MCF 10A (cell line): ENCODE measurements at regions of chr7 and their contacts with region 1.

Region 1: GRCh38 chr7:112550468-112551060 is 69.8 kb downstream of the LSMEM1 start:
- DNase-seq: peak; percentile 72
- H3K4me3 Mint-ChIP-seq: no peak overlapping the region
- H3K27ac Mint-ChIP-seq: no peak overlapping the region
- H3K4me1 Mint-ChIP-seq: no peaks in the 10 kb centered on the region
- H3K27me3 Mint-ChIP-seq: no peaks in the 10 kb centered on the region
- CTCF ChIP-seq: peak; percentile 95

Region 2: DNA sequence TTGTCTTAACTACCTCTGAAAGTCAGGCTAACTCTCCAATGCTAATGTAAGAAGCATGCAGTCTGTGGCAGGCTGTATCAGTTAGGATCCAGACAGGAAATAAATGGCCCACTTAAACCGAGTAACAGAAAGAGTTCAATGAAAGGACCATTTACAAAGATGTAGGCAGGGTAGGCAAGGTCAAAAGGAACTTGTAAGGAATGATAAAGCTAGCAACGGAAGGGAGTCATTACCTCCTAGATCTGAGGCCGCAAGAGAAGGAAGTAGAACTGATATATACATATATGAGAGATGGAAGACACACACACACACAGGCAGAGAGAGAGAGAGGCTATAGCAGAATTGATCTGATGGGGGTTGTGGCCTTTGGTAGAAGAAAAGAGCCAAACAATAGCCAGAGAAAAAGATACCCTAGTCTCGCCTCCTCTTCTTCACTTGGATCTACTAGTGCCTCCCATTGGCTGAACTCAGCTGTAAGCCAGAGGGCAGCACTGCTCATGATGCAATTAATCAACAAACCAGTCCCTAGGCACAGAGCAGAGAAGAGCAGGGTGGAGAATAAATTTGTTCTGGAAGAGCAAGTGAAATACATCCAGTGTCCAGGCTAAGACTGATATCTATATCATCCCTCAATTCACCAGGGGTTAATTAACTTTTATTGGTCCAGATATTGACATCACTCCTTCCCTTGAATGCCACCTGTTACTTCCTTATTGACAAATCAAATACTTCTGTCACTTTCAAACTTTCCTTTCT is 21.5 kb after region 1 on chr7:
- CTCF ChIA-PET with region 1: interaction called, 12 read pairs
- POLR2A ChIA-PET with region 1: no interaction called
- intact Hi-C with region 1: no loop called
- DNase-seq: peak; percentile 35
- H3K4me3 Mint-ChIP-seq: no peak overlapping the region
- H3K27ac Mint-ChIP-seq: no peak overlapping the region
- H3K4me1 Mint-ChIP-seq: peaks cover 14% of the 10 kb centered on the region
- H3K27me3 Mint-ChIP-seq: no peaks in the 10 kb centered on the region
- CTCF ChIP-seq: no peak

Region 3: GRCh38 chr7:112898432-112899290 is 348.1 kb after region 1 on chr7:
- CTCF ChIA-PET with region 1: interaction called, 68 read pairs
- POLR2A ChIA-PET with region 1: no interaction called
- intact Hi-C with region 1: loop called (anchors 1 kb)
- DNase-seq: peak; percentile 78
- H3K4me3 Mint-ChIP-seq: no peak overlapping the region
- H3K27ac Mint-ChIP-seq: peak overlapping the region; percentile 19
- H3K4me1 Mint-ChIP-seq: no peaks in the 10 kb centered on the region
- H3K27me3 Mint-ChIP-seq: no peaks in the 10 kb centered on the region
- CTCF ChIP-seq: peak; percentile 80

Region 4: DNA sequence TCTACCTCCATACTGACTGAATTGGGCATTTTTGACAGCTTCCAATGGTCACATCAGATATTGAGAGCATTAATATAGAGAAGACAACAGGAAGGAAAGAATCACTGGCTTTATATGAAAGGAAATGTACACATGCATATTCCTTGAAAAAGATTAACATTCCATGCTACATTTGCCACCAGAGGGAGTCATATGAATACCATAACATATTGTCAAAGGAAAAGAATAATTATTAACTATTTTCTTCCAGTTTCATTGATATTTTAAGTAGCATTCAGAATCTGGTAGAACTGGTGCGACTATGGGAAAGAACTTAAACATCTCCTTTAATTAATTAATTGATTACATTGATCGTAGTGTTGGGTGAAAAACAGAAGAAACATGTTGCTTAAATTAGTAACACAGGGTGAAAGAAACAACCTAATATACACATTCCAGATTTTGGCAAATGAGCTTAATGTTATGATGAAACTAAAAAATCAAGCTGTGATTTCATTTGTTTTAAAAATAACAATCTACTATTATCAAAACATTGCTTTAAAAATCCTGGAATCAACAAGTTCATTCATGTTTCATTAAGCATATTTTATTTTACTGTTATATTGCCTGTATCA is 464.6 kb after region 1 on chr7:
- CTCF ChIA-PET with region 1: interaction called, 4 read pairs
- POLR2A ChIA-PET with region 1: no interaction called
- intact Hi-C with region 1: loop called (anchors 1 kb)
- DNase-seq: peak; percentile 53
- H3K4me3 Mint-ChIP-seq: no peak overlapping the region
- H3K27ac Mint-ChIP-seq: peak overlapping the region; percentile 70
- H3K4me1 Mint-ChIP-seq: peaks cover 15% of the 10 kb centered on the region
- H3K27me3 Mint-ChIP-seq: no peaks in the 10 kb centered on the region
- CTCF ChIP-seq: no peak

Region 5: DNA sequence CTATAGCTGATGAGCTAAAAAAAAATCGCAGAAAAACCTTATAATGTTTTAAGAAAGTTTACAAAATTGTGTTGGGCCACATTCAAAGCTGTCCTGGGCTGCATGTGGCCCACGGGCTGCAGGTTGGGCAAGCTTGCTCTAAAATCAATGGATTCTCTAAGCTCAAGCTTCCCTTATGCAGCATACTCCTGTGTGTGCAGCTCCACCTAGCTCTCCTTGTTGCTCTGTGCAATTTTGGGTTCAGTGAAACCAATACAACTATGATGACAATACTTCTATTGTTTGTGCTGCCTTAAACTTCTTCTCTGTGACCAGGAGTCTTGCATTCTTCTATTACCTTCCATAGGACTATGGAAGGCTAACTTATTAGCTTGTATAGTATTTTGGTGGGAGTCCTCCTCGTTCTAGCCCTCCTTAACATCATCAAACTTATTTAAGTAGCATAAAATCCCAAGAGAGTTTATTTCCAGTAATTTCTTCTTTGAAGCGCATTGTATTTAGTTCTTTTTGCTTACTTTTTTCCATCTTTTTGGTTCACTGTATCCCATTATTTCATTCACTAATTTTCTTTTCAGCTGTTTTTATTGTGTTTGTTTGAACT is 738.7 kb after region 1 on chr7:
- CTCF ChIA-PET with region 1: no interaction called
- POLR2A ChIA-PET with region 1: no interaction called
- intact Hi-C with region 1: loop called (anchors 2 kb)
- DNase-seq: peak; percentile 64
- H3K4me3 Mint-ChIP-seq: no peak overlapping the region
- H3K27ac Mint-ChIP-seq: no peak overlapping the region
- H3K4me1 Mint-ChIP-seq: peaks cover 5% of the 10 kb centered on the region
- H3K27me3 Mint-ChIP-seq: no peaks in the 10 kb centered on the region
- CTCF ChIP-seq: peak; percentile 68

Region 6: DNA sequence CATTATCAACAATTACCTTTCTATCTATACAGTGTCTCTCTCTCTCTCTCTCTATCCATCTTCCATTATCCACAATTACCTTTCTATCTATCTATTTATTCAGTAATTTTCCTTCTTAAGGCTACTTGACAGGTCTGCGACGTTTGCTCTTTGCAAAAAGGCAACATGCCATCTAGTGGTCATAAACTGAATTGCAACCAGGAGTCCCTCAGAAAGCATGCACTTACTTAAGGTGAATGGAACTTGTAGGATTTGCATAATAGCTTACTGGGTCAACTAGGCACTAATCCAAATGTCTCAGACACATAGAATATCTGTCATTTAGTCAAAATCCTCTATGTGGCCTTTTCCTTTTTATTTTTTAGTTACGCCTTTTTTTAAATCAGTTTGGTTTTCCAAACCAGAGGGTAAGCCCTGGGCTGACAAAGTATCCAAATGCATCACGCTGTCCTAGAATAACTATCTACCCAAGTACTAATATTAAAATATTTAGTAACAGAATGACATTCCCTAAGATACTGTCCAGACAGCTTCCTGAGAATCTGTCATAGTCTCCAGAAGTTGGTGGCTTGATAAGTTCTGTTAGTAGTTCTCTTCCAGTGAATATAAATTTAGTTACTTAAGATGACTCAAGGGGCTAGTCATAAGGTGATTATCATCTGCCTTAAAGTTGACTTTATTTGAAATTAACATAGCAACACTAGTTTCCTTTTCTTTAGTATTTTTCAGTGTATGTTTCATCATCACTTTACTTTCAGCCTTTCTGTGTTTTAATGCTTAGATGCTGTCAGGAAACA is 1159.9 kb after region 1 on chr7:
- CTCF ChIA-PET with region 1: no interaction called
- POLR2A ChIA-PET with region 1: interaction called, 3 read pairs
- intact Hi-C with region 1: loop called (anchors 10 kb)
- DNase-seq: peak; percentile 84
- H3K4me3 Mint-ChIP-seq: no peak overlapping the region
- H3K27ac Mint-ChIP-seq: no peak overlapping the region
- H3K4me1 Mint-ChIP-seq: peaks cover under 1% of the 10 kb centered on the region
- H3K27me3 Mint-ChIP-seq: no peaks in the 10 kb centered on the region
- CTCF ChIP-seq: peak; percentile 90